Esophagus muscularis mucosa (tissue), 4 donors: ENCODE measurements at regions of chr20 and their contacts with region 1.

Region 1: GRCh38 chr20:39081255-39081654 is 119.1 kb downstream of the DHX35 start:
- DNase-seq: peak; percentile 95
- H3K4me3 ChIP-seq: no peak overlapping the region
- H3K27ac ChIP-seq: no peak overlapping the region
- H3K4me1 ChIP-seq: no peaks in the 10 kb centered on the region
- H3K27me3 ChIP-seq: peaks cover 0 to 53% (median 4%) of the 10 kb centered on the region in 4 donors
- CTCF ChIP-seq: peak; percentile 85 to 97 (median 91)
- EP300 ChIP-seq: no peak
- POLR2A ChIP-seq: no peak

Region 2: DNA sequence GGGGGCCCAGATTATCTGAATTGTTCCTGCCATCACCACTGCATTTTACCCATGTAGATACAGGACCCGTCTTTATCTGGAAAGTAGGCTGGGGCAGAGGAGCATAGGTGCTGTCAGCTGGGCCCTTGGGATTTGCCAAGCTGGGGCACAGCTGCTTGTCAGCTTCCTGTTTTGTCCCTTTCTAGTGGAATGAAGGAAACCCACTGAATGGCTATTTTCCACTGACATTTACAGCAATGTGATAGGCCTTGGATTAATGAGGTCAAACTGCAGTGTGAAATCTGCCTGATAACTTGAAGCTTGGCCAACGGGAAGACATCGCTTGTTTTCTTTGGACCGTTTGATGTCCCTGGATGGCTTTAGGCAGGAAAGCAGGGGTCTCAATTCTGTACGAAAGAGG is 269.1 kb before region 1 on chr20:
- intact Hi-C with region 1: no loop called
- DNase-seq: no peak
- H3K4me3 ChIP-seq: no peak overlapping the region
- H3K27ac ChIP-seq: no peak overlapping the region
- H3K4me1 ChIP-seq: peaks cover 6 to 19% (median 7%) of the 10 kb centered on the region in 4 donors
- H3K27me3 ChIP-seq: peaks cover 0 to 39% (median 2%) of the 10 kb centered on the region in 4 donors
- CTCF ChIP-seq: no peak
- EP300 ChIP-seq: no peak
- POLR2A ChIP-seq: no peak

Region 3: DNA sequence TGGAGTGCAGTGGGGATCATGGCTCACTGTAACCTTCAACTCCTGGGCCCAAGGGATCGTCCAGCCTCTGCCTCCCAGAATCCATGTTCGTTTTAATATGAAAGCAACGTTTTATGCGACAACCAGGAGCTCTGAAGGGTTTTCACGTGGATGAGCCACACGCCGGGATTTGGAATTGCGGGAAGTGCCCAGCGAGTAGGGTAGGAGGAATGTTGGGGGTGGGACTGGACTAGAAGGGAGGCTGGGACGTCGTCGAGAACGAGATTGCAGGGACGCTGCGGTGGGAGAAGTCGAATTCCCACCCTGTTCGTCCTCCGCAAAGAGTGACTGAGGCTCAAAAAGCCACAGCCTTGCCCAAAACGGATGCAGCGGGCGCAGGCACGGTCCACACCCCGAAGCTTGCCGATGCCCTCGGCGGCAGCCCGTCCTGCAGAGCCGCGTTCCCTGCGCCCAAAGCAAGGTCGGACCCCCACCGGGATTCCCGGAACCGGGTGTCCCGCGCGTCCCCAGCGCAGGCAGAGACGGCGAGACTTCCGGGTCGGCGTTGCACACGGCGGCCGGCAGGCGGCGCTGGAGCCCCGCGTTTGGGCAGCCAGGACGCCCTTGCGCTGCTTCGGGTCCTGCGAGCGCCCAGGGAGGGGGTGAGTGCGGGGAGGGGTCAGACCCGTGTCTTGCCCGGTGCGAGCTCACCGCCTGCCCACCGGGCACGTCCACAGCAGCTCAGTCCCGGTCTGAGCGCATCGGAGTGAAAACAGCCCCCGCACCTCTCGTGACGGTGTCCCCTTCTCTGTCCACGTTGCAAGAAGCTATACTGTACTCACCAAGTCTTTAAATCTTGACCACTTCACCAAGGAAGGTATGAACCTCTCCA is 31.3 kb before region 1 on chr20:
- intact Hi-C with region 1: loop called (anchors 1 kb)
- DNase-seq: no peak
- H3K4me3 ChIP-seq: peak overlapping the region; percentile 65 to 75 (median 72)
- H3K27ac ChIP-seq: peak overlapping the region; percentile 61 to 85 (median 74)
- H3K4me1 ChIP-seq: peaks cover 8 to 35% (median 31%) of the 10 kb centered on the region in 4 donors
- H3K27me3 ChIP-seq: peaks cover 0 to 16% (median 0%) of the 10 kb centered on the region in 4 donors
- CTCF ChIP-seq: peak; percentile 96 to 100 (median 97)
- EP300 ChIP-seq: no peak
- POLR2A ChIP-seq: no peak